Posterior vena cava (tissue), 2 donors: ENCODE measurements at regions of chr12 and their contacts with region 1.

Region 1: GRCh38 chr12:32548691-32549281 is 130.3 kb upstream of the DNM1L start:
- DNase-seq: peak; percentile 83

Region 2: GRCh38 chr12:32140877-32141276 is 407.9 kb before region 1 on chr12:
- intact Hi-C with region 1: loop called in 1 of 2 experiments (anchors 5 kb)
- DNase-seq: no peak

Region 3: DNA sequence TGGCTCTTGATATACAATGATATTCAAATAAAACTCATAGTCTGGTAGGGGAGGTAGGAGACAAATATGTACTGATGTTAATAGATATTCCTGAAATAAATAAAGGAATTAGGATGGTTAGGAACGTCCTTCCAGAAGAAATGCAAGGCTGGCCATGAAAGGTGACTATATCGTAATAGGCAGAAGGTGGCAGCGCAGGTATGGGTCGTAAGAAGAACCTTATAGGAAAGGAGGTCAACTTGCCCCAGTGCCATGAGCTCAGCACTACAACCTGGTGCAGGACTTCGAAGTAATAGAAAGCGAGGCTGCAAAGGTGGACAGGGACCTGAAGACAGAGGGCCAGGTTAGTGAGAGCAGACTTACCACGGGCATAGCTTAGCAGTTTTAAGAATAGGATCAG is 204.7 kb before region 1 on chr12:
- intact Hi-C with region 1: no loop called
- DNase-seq: no peak